BJ (cell line): ENCODE measurements at regions of chr11 and their contacts with region 1.

Region 1: DNA sequence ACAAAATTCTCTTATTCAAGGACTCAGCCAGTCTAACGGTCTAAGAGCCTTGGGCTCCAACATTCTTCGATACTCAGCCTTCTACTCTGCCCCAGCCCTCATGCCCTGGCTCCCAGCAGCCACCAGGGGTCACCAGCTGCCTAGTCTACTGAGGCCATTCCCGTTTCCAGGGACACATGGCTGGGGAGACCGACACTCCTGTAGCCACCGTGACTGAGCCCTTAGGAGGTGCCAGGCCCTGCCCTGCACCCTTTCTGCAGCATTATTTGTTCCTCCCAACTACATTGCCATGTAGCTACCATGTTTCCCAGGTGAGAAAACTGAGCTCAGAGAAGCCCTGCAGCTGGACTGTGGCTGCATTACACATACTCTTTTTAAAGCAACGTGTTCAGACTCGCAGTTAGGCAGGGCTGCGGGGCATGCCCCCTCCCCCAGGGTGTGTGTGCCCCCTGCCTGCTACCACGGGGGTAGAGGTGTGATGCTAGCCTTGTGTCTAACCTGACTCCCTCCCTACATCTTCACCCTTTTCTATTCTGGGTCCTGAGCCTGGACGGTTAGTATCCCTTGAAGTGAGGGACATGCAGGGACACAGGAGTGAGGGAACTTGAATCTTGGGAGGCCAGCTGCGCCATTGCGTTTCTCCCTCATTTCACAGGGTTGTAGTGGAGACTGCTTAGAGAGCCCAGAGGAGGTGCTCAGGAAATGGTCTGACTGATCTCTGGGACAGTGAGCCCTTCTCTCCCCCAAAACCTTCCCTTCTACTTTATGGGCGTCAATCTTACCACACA is 17.5 kb downstream of the ATG16L2 start:
- DNase-seq: no peak
- H3K4me3 ChIP-seq: no peak overlapping the region
- H3K27me3 ChIP-seq: no peaks in the 10 kb centered on the region
- CTCF ChIP-seq: peak; percentile 97

Region 2: DNA sequence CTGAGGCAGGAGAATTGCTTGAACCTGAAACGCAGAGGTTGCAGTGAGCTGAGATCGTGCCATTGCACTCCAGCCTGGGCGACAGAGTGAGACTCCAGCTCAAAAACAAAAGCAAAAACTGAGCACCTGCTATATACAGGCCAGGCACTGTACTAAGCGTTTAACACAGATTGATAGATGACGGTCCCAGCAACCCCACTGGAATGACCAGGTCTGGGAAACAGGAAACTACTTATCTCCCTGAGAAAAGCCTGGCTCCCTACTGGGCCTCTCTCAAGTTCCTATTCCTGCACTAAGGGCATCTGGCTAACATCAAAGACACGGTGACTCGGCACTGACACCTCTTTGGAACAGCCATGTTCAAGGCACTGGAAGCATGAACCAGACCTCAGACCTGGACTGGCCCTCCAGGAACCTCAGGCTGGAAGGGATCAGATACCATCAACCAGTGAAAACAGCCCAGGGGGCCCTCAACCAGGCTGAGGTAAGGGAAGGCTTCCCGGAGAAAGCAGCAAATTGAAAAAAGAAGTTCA is 96.1 kb before region 1 on chr11:
- CTCF ChIA-PET with region 1: no interaction called
- POLR2A ChIA-PET with region 1: interaction called, 12 read pairs
- DNase-seq: no peak
- H3K4me3 ChIP-seq: no peak overlapping the region
- H3K27me3 ChIP-seq: no peaks in the 10 kb centered on the region
- CTCF ChIP-seq: no peak

Region 3: DNA sequence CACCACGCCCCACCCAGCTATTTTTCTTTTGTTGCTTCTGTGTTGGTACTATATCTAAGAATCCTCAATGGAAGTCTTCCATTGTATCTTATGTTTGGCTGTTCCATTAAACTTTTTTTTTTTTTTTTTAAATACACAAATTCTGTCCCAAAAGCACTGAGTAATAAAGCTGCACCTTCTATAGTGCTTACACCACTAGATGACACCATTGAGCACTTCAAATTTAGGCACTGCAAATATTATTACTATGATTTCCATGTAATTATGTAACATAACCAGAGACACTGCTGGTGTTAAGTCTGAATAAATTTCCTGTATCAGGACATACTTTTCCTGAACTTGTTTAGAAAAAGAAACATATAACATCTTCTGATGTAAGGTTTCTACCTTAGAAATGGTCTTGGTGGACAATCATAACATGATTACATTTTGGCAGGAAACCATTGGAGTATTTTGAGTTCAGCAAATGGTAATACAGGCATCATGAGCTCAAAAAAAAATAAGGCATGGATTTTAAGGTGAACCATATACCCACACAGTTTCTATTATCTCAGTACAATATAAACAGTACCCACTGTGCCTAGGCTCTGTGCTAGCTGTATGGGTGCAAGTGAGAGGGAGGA is 93.0 kb after region 1 on chr11:
- CTCF ChIA-PET with region 1: interaction called, 11 read pairs
- POLR2A ChIA-PET with region 1: no interaction called
- DNase-seq: no peak
- H3K4me3 ChIP-seq: no peak overlapping the region
- H3K27me3 ChIP-seq: no peaks in the 10 kb centered on the region
- CTCF ChIP-seq: peak; percentile 62

Region 4: GRCh38 chr11:72950685-72951084 is 119.0 kb after region 1 on chr11:
- CTCF ChIA-PET with region 1: no interaction called
- POLR2A ChIA-PET with region 1: no interaction called
- DNase-seq: no peak
- H3K4me3 ChIP-seq: no peak overlapping the region
- H3K27me3 ChIP-seq: no peaks in the 10 kb centered on the region
- CTCF ChIP-seq: no peak

Region 5: GRCh38 chr11:73164803-73165540 is 333.3 kb after region 1 on chr11:
- CTCF ChIA-PET with region 1: interaction called, 11 read pairs
- POLR2A ChIA-PET with region 1: no interaction called
- DNase-seq: no peak
- H3K4me3 ChIP-seq: no peak overlapping the region
- H3K27me3 ChIP-seq: no peaks in the 10 kb centered on the region
- CTCF ChIP-seq: no peak

Region 6: GRCh38 chr11:73184953-73185671 is 353.4 kb after region 1 on chr11:
- CTCF ChIA-PET with region 1: interaction called, 183 read pairs
- POLR2A ChIA-PET with region 1: no interaction called
- DNase-seq: no peak
- H3K4me3 ChIP-seq: no peak overlapping the region
- H3K27me3 ChIP-seq: no peaks in the 10 kb centered on the region; the same call in 1 of the 2 replicates
- CTCF ChIP-seq: peak; percentile 90

Region 7: GRCh38 chr11:73288873-73289707 is 457.4 kb after region 1 on chr11:
- CTCF ChIA-PET with region 1: interaction called, 10 read pairs
- POLR2A ChIA-PET with region 1: no interaction called
- DNase-seq: no peak
- H3K4me3 ChIP-seq: no peak overlapping the region
- H3K27me3 ChIP-seq: no peaks in the 10 kb centered on the region
- CTCF ChIP-seq: peak; percentile 96